ENCODE measurements at regions of chr15 and their contacts with region 1.

Region 1: GRCh38 chr15:84934941-84935729 is 46.5 kb upstream of the PDE8A start:
- DNase-seq: no peak
- ATAC-seq: peak in 3 of 4 donors; percentile 33 to 40 (median 37)
- H3K4me3 ChIP-seq: no peak overlapping the region
- H3K27ac ChIP-seq: no peak overlapping the region
- H3K4me1 ChIP-seq: peaks cover 0 to 2% (median 0%) of the 10 kb centered on the region in 12 donors
- H3K27me3 ChIP-seq: no peaks in the 10 kb centered on the region
- CTCF ChIP-seq: peak in 7 of 12 donors; percentile 6 to 36 (median 18)
- POLR2A ChIP-seq: no peak

Region 2: DNA sequence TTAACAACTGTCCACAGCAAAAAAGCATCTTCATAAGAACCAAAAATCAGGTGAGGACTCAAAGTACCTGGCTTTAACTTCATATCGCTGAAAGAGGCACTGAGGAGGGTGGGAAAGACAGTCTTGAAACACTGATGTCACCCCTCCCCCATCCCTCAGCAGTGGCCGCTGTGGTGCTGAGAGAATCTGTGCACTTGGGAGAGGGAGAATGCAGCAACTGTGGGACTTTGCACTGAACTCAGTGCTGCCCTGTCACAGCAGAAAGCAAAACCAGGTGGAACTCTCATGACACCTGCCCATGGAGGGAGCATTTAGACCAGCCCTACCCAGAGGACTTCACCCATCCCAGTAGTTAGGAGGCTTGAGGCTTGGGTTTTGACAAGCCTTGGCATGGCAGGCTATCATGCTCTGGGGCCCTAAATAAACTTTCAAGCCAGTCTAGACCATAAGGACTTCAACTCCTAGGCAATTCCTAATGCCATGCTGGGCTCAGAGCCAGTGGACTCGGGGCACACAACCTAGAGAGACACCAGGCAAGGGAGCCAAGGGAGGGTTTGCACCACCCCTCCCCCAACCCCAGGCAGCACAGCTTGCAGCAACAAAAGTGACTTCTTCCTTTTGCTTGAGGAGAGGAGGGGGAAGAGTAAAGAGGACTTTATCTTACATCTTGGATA is 340.4 kb before region 1 on chr15:
- intact Hi-C with region 1: loop called in 2 of 10 experiments (anchors 5 kb)
- DNase-seq: peak in 1 of 5 donors; percentile 36
- ATAC-seq: no peak
- H3K4me3 ChIP-seq: no peak overlapping the region
- H3K27ac ChIP-seq: no peak overlapping the region
- H3K4me1 ChIP-seq: peaks cover 0 to 45% (median 0%) of the 10 kb centered on the region in 12 donors
- H3K27me3 ChIP-seq: no peaks in the 10 kb centered on the region
- CTCF ChIP-seq: no peak
- POLR2A ChIP-seq: no peak

Region 3: GRCh38 chr15:84883916-84884768 is 51.0 kb before region 1 on chr15 and contains the start of gene SLC28A1:
- intact Hi-C with region 1: loop called in 1 of 10 experiments (anchors 2 kb)
- DNase-seq: peak in 2 of 5 donors; percentile 53 to 55
- ATAC-seq: peak; percentile 10 to 53 (median 25)
- H3K4me3 ChIP-seq: no peak within 1 kb of the TSS
- H3K27ac ChIP-seq: peak within 1 kb of the TSS in 10 of 12 donors; percentile 6 to 82 (median 70)
- H3K4me1 ChIP-seq: peaks cover 0 to 19% (median 8%) of the 10 kb centered on the region in 12 donors
- H3K27me3 ChIP-seq: no peaks in the 10 kb centered on the region
- CTCF ChIP-seq: no peak
- POLR2A ChIP-seq: no peak
- total RNA-seq, gene SLC28A1: 0.14 to 2.9 (median 0.74) TPM in 8 of 9 donors, not detected in the other

Region 4: GRCh38 chr15:84904419-84904818 is 30.7 kb before region 1 on chr15:
- intact Hi-C with region 1: no loop called
- DNase-seq: peak in 1 of 5 donors; percentile 62
- ATAC-seq: peak; percentile 74 to 86 (median 84)
- H3K4me3 ChIP-seq: no peak overlapping the region
- H3K27ac ChIP-seq: peak overlapping the region; percentile 31 to 85 (median 75)
- H3K4me1 ChIP-seq: peaks cover 3 to 40% (median 18%) of the 10 kb centered on the region in 12 donors
- H3K27me3 ChIP-seq: no peaks in the 10 kb centered on the region
- CTCF ChIP-seq: no peak
- POLR2A ChIP-seq: no peak

Measured in heart left ventricle (tissue), 16 donors.